A673 (cell line): ENCODE measurements at regions of chrX and their contacts with region 1.

Region 1: GRCh38 chrX:79167462-79167861 is 23.0 kb downstream of the GPR174 start:
- DNase-seq: peak; percentile 50
- H3K4me3 ChIP-seq: no peak overlapping the region
- H3K27ac ChIP-seq: peak overlapping the region; percentile 75
- H3K4me1 ChIP-seq: peaks cover 36% of the 10 kb centered on the region
- H3K27me3 ChIP-seq: no peaks in the 10 kb centered on the region
- CTCF ChIP-seq: no peak

Region 2: DNA sequence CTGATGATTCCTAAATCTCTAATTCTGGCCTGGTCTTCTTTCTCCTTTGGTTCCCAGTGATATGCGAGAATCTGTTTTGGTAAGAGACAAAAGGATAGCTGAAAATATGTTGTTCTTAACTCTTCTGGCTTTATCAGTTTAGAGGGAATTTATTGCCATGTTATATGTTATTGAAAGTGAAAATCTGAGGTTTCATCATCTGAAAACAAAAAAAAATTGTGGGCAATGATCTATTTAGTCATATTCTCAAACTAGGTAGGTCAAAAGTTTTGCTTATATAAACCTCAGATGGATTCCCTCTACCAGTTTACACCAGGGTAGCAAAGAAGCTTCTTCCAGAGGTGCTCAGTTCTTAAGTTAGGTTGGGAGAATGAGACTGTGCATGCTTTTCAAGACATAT is 96.1 kb after region 1 on chrX:
- CTCF ChIA-PET with region 1: no interaction called
- POLR2A ChIA-PET with region 1: no interaction called
- intact Hi-C with region 1: loop called (anchors 5 kb)
- DNase-seq: no peak
- H3K4me3 ChIP-seq: no peak overlapping the region
- H3K27ac ChIP-seq: peak overlapping the region; percentile 60
- H3K4me1 ChIP-seq: peaks cover 59% of the 10 kb centered on the region
- H3K27me3 ChIP-seq: no peaks in the 10 kb centered on the region
- CTCF ChIP-seq: no peak